GM18951 (cell line): ENCODE measurements at regions of chr17 and their contacts with region 1.

Region 1: GRCh38 chr17:66165513-66166123 is 26.3 kb downstream of the CEP112 start:
- POLR2A ChIP-seq: no peak

Region 2: GRCh38 chr17:65294179-65294720 is 871.4 kb before region 1 on chr17:
- in situ Hi-C with region 1: loop called (anchors 25 kb)
- POLR2A ChIP-seq: no peak